Activated T-helper 1 cell treated with anti-CD3 and anti-CD28 coated beads, Interleukin-12 subunit alpha, Interleukin-12 subunit beta, Interleukin-2, Interleukin-4 antibody, amounts not matched to agents 30 ng/mL and 10 ng/mL and 1 ng/mL, durations not matched to agents 14 hours and 24 hours and 36 hours (primary cell): ENCODE measurements at regions of chr15 and their contacts with region 1.

Region 1: GRCh38 chr15:49155110-49155833 is at the start of gene COPS2:
- DNase-seq: peak; percentile 93
- H3K4me3 Mint-ChIP-seq: peak within 1 kb of the TSS; percentile 99
- H3K27ac Mint-ChIP-seq: peak within 1 kb of the TSS; percentile 99
- H3K4me1 Mint-ChIP-seq: peaks cover 47% of the 10 kb centered on the region
- H3K27me3 Mint-ChIP-seq: peaks cover 3% of the 10 kb centered on the region
- total RNA-seq, gene COPS2: 99.7 and 105 TPM in 2 replicates

Region 2: DNA sequence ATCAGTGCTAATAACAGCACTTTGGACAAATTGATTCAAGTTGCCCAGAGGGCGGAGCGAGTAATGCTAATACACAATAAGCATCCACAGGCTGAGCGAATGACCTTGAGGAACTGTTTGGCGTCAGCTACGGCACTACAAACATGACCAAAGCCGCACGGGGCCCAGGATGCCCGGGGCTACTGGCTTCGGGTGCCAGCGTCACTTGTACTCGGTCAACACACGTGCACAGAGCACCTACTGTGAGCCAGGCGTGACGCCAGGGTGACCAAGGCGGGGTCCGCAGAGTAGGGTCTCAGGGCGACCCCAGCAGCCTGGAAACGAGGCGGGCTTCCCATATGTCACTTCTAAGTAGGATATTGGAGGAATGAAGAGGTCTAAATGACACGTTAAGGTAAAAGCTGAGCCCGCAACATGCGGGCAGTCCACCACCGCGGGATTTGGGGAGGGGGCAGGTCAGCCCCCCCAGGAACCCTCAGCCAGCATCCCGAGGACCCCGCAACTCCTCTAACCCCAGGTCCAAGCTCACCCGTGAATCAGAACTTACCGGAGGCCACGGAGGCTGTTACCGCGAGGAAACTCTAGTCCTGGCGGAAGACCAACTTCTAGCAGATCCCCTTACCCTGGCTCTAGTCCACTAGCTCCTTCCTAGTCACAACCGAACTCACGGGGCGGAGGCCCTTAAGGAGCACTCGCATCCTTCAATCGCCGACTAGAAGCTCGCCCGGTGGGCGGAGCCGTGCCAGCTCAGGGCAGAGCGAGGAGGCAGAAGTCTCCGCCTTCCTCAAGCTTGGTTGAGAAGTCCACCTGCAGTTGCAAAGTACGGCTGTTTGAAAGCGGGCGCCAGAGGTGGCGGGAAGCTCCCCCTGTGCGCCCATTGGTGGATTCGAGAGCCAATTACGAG is 344.6 kb before region 1 on chr15 and contains the start of gene CEP152:
- intact Hi-C with region 1: loop called (anchors 1 kb)
- DNase-seq: peak; percentile 98
- H3K4me3 Mint-ChIP-seq: peak within 1 kb of the TSS; percentile 97
- H3K27ac Mint-ChIP-seq: peak within 1 kb of the TSS; percentile 93
- H3K4me1 Mint-ChIP-seq: peaks cover 44% of the 10 kb centered on the region
- H3K27me3 Mint-ChIP-seq: peaks cover 15% of the 10 kb centered on the region
- total RNA-seq, gene CEP152: 27.3 and 28.0 TPM in 2 replicates

Region 3: DNA sequence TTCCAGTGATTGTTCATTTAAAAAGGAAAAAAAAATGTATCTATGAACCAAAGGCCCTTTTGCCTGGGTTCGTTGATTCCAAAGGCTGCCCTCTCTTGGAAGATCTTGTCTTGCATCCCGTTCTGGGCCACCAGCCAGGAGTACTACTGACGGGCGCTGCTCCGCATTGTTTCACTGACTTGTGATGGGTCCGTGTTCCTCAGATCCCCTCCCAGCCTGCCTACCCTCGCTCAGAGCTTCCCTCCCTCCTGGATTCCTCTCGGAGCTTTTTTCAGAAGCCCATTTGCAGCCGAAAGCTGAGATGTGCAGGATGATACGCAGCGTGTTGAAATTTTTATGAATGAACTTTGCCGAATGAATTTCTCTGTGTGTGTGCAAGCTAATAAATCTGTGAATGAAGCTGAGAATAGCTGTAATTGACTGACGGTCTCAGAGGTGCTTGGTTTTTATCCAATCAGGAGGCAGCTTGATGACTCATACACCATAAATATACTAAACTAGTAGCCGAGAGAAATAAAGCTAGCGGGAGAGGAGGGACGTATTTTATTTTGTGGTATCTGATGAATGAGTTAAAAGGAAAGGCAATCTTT is 191.7 kb before region 1 on chr15 and contains the start of gene SHC4:
- intact Hi-C with region 1: loop called (anchors 5 kb)
- DNase-seq: no peak
- H3K4me3 Mint-ChIP-seq: peak within 1 kb of the TSS; percentile 84
- H3K27ac Mint-ChIP-seq: peak within 1 kb of the TSS; percentile 82
- H3K4me1 Mint-ChIP-seq: peaks cover 64% of the 10 kb centered on the region
- H3K27me3 Mint-ChIP-seq: peaks cover 11% of the 10 kb centered on the region
- total RNA-seq, gene SHC4: 25.7 and 26.4 TPM in 2 replicates

Region 4: DNA sequence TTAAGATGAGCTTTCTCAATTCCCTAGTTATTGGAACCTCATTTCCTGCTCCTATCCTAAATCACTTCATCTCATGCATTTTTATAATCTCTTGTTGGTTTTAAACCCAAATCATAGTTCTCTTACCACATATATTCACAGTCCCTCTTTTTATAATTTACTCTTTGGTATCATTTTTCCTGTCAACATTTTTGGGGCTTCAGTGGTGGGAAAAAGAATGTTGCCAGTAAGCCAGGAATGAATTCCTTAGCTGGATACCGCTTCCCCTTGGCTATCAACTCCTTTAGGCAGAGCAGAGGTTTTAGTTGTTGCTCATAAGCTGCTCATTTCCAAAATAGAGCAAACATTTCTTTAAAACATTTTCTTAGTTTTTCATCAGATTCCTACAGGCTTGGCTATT is 127.1 kb after region 1 on chr15:
- intact Hi-C with region 1: loop called (anchors 5 kb)
- DNase-seq: no peak
- H3K4me3 Mint-ChIP-seq: no peak overlapping the region
- H3K27ac Mint-ChIP-seq: no peak overlapping the region
- H3K4me1 Mint-ChIP-seq: peaks cover 24% of the 10 kb centered on the region
- H3K27me3 Mint-ChIP-seq: no peaks in the 10 kb centered on the region

Region 5: DNA sequence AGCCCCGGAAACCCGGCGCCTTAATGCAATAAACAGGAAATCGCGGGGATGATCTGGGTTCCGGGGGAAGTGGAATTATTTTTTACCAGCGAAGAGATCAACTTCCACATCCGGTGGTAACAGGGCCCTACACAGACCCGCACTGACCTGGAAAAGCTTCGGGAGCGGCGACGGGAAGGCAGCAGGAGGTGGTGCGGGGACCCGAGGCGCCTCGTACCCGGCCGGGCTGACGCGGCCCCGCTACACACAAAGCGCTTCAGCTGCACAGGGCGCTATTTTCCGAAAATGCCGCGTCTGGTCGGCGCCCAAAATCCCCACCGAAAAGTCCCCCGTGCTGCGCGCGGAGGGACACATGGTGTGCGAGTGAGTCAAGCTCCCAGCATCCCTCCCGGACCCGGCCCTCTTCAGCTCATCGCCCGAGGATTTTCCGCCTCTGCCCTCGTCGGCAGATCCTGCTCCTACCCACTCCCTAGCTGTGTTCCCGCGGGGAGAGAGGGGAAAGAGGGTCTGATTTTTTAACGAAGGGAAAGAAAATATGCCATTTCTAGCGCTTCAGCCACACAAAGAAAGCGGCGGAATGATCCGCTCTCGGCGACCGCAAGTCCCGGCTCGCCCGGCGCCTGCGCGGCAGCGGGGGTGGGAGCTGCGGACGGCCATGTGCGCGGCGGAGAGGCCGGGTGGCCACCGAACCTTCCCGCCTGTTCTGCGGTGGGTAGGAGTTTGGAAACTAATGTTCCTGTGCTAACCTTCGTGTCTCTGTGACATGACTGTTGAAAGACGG is 1199.8 kb after region 1 on chr15 and contains the start of gene GABPB1:
- intact Hi-C with region 1: loop called (anchors 2 kb)
- DNase-seq: peak; percentile 87
- H3K4me3 Mint-ChIP-seq: peak within 1 kb of the TSS; percentile 100
- H3K27ac Mint-ChIP-seq: peak within 1 kb of the TSS; percentile 100
- H3K4me1 Mint-ChIP-seq: peaks cover 48% of the 10 kb centered on the region
- H3K27me3 Mint-ChIP-seq: no peaks in the 10 kb centered on the region
- total RNA-seq, gene GABPB1: 80.7 and 81.0 TPM in 2 replicates